Transverse colon (tissue), 4 donors: ENCODE measurements at regions of chr3 and their contacts with region 1.

Region 1: DNA sequence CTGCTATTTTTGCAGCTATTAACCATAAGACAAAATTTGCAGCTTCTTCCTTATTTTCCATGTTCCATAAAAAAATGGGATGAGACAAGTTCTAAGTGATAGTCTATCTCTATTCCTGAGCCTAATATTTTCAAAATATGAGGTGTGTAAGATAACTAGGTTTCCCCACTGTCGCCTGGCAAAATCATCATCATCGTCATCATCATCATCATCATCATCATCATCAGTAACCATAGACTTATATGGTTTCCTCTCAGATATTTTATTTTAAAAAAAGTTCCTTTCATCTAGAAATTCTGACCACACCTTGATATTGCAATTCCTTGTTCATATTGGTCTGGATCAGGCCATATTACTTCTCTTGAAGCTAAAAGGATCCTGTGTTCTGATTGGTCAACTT is 273.3 kb downstream of the GRM7 start:
- DNase-seq: no peak
- H3K4me3 ChIP-seq: no peak overlapping the region
- H3K27ac ChIP-seq: no peak overlapping the region
- H3K4me1 ChIP-seq: no peaks in the 10 kb centered on the region
- H3K27me3 ChIP-seq: no peaks in the 10 kb centered on the region
- CTCF ChIP-seq: no peak
- EP300 ChIP-seq: no peak
- POLR2A ChIP-seq: no peak

Region 2: DNA sequence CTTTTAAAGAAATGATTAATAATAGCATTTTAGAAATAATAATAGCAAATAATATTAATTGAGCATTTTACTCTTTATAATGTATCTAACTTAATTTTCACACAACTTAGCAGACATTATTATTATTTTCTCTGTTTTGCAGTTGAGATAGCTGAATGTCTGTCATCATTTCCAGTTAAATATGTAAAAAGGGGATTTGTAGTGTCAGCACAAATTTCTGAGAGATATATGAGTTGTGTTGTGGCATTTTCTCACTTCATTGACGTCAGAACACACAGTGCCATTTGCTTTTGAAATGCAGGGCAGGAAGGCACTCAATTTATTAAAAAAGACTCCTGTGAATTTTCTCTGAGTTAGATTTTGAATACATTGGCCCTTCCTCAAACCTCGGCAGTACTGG is 162.3 kb before region 1 on chr3:
- in situ Hi-C with region 1: no loop called
- intact Hi-C with region 1: no loop called
- DNase-seq: no peak
- H3K4me3 ChIP-seq: no peak overlapping the region
- H3K27ac ChIP-seq: no peak overlapping the region
- H3K4me1 ChIP-seq: no peaks in the 10 kb centered on the region
- H3K27me3 ChIP-seq: no peaks in the 10 kb centered on the region
- CTCF ChIP-seq: no peak
- EP300 ChIP-seq: no peak
- POLR2A ChIP-seq: no peak

Region 3: DNA sequence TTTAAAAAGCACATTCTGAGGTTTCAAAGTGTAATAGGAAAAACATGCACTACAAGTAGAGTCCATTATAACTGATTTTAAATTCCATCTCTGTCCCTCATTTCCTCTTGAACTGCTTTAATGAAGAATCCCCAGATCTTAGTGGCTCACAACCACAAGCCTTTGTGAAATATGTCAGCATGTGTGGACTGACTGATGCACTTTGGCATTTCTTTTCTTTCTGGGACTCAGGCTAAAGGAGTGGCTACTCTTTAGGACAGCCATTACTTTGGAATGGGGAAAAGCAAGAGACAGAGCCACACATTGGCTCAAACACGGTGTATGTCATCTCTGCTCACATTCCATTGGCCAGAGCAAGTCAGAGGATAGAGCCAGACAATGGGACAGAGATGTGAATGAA is 133.7 kb before region 1 on chr3:
- in situ Hi-C with region 1: no loop called
- intact Hi-C with region 1: no loop called
- DNase-seq: no peak
- H3K4me3 ChIP-seq: no peak overlapping the region
- H3K27ac ChIP-seq: no peak overlapping the region
- H3K4me1 ChIP-seq: no peaks in the 10 kb centered on the region
- H3K27me3 ChIP-seq: no peaks in the 10 kb centered on the region
- CTCF ChIP-seq: no peak
- EP300 ChIP-seq: no peak
- POLR2A ChIP-seq: no peak

Region 4: GRCh38 chr3:7144696-7145308 is 10.6 kb after region 1 on chr3:
- in situ Hi-C with region 1: no loop called
- intact Hi-C with region 1: loop called (anchors 1 kb)
- DNase-seq: no peak
- H3K4me3 ChIP-seq: no peak overlapping the region
- H3K27ac ChIP-seq: no peak overlapping the region
- H3K4me1 ChIP-seq: no peaks in the 10 kb centered on the region
- H3K27me3 ChIP-seq: no peaks in the 10 kb centered on the region
- CTCF ChIP-seq: peak in 4 of 5 experiments; percentile 16 to 48 (median 28)
- EP300 ChIP-seq: no peak
- POLR2A ChIP-seq: no peak

Region 5: GRCh38 chr3:7328339-7328738 is 194.1 kb after region 1 on chr3:
- in situ Hi-C with region 1: no loop called
- intact Hi-C with region 1: no loop called
- DNase-seq: no peak
- H3K4me3 ChIP-seq: no peak overlapping the region
- H3K27ac ChIP-seq: no peak overlapping the region
- H3K4me1 ChIP-seq: no peaks in the 10 kb centered on the region
- H3K27me3 ChIP-seq: no peaks in the 10 kb centered on the region
- CTCF ChIP-seq: no peak
- EP300 ChIP-seq: no peak
- POLR2A ChIP-seq: no peak

Region 6: GRCh38 chr3:7934362-7934761 is 800.1 kb after region 1 on chr3:
- in situ Hi-C with region 1: no loop called
- intact Hi-C with region 1: no loop called
- DNase-seq: peak; percentile 48
- H3K4me3 ChIP-seq: no peak overlapping the region
- H3K27ac ChIP-seq: peak overlapping the region in 1 of 4 donors; percentile 23
- H3K4me1 ChIP-seq: peaks cover 0 to 5% (median 3%) of the 10 kb centered on the region in 4 donors
- H3K27me3 ChIP-seq: no peaks in the 10 kb centered on the region
- CTCF ChIP-seq: no peak
- EP300 ChIP-seq: no peak
- POLR2A ChIP-seq: no peak